ENCODE measurements at regions of chr17 and their contacts with region 1.

Region 1: DNA sequence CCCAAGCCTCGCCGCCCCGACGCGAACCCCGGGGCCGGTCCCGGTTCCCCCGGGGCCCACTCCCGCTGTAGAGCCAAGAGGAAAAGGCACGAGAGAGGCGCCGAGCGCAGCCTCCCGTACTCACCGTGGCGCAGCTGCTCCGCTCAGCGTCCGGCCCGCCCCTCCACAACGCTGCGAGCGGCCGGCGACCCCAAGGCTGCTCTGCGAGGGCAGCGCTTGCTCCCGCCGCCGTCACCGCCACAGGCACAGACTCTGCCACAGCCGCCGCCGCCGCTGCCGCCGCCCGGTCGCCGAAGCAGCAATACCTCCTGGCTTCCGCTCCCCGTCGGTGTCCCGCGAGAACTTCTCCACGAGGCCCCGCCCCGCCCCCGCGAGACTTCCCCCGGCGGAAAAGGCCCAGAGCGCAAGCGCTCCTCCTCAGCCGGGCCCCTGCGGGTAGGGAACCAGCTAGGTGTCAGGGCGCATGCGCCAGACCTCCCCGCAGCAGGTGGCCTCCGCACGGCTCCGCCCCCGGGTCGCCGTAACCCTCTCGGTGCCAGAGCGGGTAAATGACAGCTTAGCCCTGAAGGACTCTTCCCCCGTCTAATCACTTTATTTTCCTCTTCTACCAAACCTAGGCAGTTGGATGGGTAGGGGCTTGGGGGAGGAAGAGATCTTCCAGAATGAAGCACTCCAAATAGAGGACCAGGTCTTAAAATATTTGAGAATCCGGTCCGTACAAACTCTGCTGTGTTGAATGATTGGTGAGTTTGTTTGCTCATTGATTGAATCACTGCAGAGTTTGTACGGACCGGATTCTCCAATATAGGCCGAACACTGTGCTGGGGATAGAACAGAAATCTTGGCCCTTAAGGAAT is at the start of gene GRB2:
- DNase-seq: peak; percentile 97 to 100 (median 99)

Region 2: DNA sequence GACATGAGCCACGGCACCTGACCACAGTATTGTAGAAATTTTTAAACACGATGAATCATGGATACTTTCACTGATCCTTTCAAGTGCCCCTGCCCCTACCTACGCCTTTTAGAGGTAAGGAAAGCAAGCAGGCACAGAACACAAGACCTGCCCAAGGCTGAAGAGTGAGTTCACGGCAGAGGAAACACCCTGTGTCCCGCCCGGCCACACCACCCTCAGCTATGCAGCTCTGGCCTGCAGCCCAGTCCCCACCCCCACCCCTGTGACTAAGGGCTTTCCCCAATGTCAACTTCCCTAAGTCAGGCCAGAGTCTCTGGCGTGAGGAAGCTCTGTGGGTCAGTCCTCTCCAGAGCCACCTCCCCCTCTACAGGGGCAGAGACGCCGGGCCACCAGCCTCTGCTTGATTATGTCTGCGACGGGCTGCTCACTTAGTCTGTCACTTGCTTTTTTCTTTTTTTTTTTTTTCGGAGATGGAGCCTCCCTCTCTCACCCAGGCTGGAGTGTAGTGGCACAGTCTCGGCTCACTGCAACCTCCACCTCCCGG is 309.4 kb before region 1 on chr17:
- intact Hi-C with region 1: no loop called
- DNase-seq: peak in 1 of 10 donors; percentile 64

Region 3: DNA sequence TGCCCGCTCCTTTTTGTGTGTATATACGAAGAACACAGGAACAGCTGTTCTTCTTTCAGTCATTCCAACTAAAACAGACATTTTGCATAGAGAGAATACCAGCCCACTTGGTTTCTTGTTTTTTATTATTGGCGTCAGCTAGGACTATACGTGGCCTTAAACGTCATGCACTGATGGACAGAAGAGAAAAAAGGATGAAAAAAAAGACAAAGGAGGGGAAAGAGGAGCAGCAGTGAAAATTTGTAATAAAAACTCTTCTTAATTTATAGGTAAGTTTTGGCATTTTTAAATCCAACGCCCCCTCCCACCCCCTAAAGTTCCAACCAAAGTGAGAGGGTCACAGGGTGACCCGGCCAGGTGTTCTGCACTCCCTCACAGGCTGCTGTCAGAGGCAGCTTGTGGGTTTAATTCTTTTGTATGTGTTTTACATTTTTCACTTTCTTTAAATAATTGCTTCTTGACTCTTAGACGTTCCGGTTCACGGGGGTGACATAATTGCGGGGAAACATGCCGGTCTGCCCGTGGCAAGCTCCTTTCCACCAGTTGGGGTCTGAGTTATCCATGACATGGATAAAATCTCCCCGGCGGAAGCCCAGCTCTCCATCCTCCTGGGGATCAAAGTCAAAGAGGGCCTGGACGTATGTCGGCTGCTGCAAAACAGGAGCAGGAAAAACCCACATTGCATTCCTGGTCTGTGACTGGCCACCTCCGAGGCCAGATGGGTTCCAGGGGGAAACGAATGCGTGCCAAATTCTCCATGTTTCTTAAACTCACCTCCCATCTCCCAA is 85.5 kb before region 1 on chr17:
- intact Hi-C with region 1: loop called (anchors 1 kb)
- DNase-seq: peak in 2 of 10 donors; percentile 19 to 42

Region 4: GRCh38 chr17:75393523-75394331 is 11.9 kb before region 1 on chr17:
- intact Hi-C with region 1: loop called (anchors 1 kb)
- DNase-seq: peak; percentile 98 to 100 (median 99)